ENCODE measurements at regions of chr2 and their contacts with region 1.

Region 1: GRCh38 chr2:55196506-55196905 is 35.6 kb downstream of the CLHC1 start:
- DNase-seq: no peak

Region 2: GRCh38 chr2:54657664-54658083 is 538.8 kb before region 1 on chr2:
- intact Hi-C with region 1: loop called in 1 of 2 experiments (anchors 10 kb)
- DNase-seq: no peak

Region 3: DNA sequence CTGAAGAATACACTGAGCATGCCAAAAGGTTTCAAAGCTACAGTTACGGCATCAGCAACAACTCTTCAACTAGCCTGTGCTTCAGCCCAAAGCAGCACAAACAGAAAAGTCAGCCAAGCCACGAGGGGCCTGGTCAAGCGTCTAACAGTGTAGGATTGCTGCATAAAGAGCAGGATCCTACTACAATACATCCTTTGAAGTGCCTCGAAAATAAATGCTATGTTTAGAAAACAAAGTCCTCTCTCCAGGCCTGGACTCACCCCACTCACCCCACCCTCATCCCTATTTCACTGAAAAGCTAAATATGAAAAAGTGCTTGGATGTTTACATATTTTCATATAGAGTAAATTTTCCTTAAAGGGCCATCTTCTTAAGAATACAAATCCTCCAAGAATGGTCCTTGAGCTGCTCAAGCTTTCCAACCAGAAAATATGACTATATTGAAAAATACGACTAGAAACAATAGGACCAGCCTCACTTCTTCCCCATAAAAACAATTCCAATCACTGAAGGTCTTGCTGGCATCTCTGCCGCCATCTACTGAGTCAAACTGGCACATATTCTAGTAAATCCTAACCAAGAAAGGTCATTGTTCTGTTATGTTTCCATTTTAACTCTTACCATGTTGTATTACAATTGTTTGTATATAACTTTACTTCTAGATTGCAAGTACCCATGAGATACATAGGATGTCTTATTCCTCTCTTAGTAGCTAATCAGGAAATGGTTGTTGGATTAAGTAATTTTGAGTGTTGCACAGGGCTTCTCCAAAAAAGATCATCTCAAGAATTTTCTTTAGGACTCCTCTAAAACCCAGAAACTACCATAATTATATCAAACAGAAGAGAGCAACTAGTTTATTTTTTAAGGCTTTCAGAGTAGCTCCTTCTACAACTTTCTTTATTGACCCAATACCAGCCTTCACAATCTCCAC is 28.0 kb before region 1 on chr2:
- intact Hi-C with region 1: no loop called
- DNase-seq: peak; percentile 81

Region 4: DNA sequence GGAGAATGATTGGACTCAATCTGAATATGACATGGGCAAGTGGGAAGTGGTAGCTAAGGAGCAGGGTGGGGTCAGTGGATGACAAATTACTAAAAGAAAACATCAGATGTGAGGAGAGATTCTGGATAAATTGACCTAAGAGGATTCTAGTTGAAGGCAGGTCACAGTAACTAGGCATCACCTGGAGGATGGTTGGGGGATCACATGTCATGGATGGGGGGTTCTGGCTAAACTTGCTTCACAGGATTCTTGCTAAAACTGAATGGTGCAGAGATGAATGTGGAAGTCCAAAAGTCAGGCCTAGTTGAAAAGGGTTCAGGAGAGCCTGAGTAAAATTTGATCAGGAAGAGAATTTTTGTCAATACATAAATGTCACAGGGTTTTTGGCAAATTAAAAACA is 17.3 kb after region 1 on chr2:
- intact Hi-C with region 1: loop called in 1 of 2 experiments (anchors 1 kb)
- DNase-seq: no peak

Region 5: GRCh38 chr2:55252832-55253231 is 56.3 kb after region 1 on chr2:
- intact Hi-C with region 1: no loop called
- DNase-seq: no peak